ENCODE measurements at regions of chr1 and their contacts with region 1.

Region 1: GRCh38 chr1:2044510-2045319 is 5.5 kb upstream of the PRKCZ start:
- DNase-seq: no peak
- H3K4me3 ChIP-seq: peak overlapping the region; percentile 22 to 64 (median 33)
- H3K27ac ChIP-seq: peak overlapping the region in 2 of 4 donors; percentile 25 to 36
- H3K4me1 ChIP-seq: peaks cover 12 to 45% (median 18%) of the 10 kb centered on the region in 3 donors
- H3K27me3 ChIP-seq: peaks cover 0 to 76% (median 2%) of the 10 kb centered on the region in 4 donors
- CTCF ChIP-seq: peak; percentile 67 to 97 (median 94)
- POLR2A ChIP-seq: no peak

Region 2: GRCh38 chr1:1959840-1960479 is 84.8 kb before region 1 on chr1:
- intact Hi-C with region 1: loop called (anchors 5 kb)
- DNase-seq: no peak
- H3K4me3 ChIP-seq: peak overlapping the region in 1 of 4 donors; percentile 31
- H3K27ac ChIP-seq: no peak overlapping the region
- H3K4me1 ChIP-seq: peaks cover 0 to 13% (median 8%) of the 10 kb centered on the region in 3 donors
- H3K27me3 ChIP-seq: peaks cover 0 to 69% (median 0%) of the 10 kb centered on the region in 4 donors
- CTCF ChIP-seq: peak; percentile 40 to 93 (median 81)
- POLR2A ChIP-seq: no peak

Region 3: GRCh38 chr1:2085080-2085479 is 40.4 kb after region 1 on chr1:
- intact Hi-C with region 1: no loop called
- DNase-seq: no peak
- H3K4me3 ChIP-seq: no peak overlapping the region
- H3K27ac ChIP-seq: no peak overlapping the region
- H3K4me1 ChIP-seq: no peaks in the 10 kb centered on the region
- H3K27me3 ChIP-seq: peaks cover 0 to 12% (median 0%) of the 10 kb centered on the region in 4 donors
- CTCF ChIP-seq: no peak
- POLR2A ChIP-seq: no peak

Region 4: DNA sequence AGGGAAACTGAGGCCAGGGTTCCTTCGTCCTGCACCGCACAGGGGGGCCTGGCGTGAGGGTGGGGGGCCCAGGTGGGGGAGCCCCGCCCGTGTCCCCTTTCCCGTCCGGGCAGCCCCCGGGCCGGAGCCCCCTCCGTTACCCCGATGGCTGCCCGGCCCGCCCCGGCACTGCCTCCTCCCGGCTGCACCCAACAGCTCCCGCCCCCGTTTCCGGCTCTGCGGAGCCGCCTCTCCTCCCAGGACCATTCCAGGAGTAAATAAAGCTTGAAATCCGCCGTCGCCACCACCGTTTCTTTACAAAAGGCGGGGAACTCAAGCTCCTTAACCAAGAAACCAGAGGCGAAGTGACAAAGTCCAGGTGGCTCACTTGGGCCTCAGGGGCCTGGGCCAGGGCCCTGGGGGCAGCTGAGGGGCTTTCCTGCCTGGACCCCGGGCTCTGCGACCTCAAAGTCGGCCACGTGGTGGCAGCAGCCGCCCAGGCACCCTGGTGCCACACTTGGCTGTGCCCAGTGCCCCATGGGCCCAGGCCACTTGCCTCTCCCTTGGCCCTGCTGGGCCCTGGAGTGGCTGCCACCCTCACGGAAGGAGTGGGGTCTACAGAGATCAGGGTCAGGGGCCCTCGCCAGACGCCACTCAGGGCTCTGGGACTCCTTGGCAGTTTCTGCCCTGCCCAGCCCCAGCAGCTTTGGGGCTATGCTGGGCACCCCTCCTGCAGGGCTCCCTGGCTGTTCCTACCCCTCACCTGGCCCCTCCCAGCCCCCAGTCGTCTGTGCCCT is 150.4 kb after region 1 on chr1:
- intact Hi-C with region 1: no loop called
- DNase-seq: peak; percentile 73
- H3K4me3 ChIP-seq: peak overlapping the region; percentile 41 to 89 (median 77)
- H3K27ac ChIP-seq: peak overlapping the region; percentile 82 to 97 (median 94)
- H3K4me1 ChIP-seq: peaks cover 45 to 77% (median 59%) of the 10 kb centered on the region in 3 donors
- H3K27me3 ChIP-seq: no peaks in the 10 kb centered on the region
- CTCF ChIP-seq: peak; percentile 80 to 99 (median 93)
- POLR2A ChIP-seq: no peak